ENCODE measurements at regions of chr21 and their contacts with region 1.

Region 1: GRCh38 chr21:25313829-25314228 is 293.5 kb downstream of the MRPL39 start:
- DNase-seq: peak; percentile 67
- ATAC-seq: peak; percentile 85
- H3K4me3 ChIP-seq: no peak overlapping the region
- H3K27ac ChIP-seq: no peak overlapping the region
- H3K4me1 ChIP-seq: peaks cover 1% of the 10 kb centered on the region; the same call in 1 of the 2 replicates
- H3K27me3 ChIP-seq: no peaks in the 10 kb centered on the region
- CTCF ChIP-seq: peak; percentile 68
- POLR2A ChIP-seq: no peak
- RAD21 ChIP-seq: peak; percentile 75

Region 2: DNA sequence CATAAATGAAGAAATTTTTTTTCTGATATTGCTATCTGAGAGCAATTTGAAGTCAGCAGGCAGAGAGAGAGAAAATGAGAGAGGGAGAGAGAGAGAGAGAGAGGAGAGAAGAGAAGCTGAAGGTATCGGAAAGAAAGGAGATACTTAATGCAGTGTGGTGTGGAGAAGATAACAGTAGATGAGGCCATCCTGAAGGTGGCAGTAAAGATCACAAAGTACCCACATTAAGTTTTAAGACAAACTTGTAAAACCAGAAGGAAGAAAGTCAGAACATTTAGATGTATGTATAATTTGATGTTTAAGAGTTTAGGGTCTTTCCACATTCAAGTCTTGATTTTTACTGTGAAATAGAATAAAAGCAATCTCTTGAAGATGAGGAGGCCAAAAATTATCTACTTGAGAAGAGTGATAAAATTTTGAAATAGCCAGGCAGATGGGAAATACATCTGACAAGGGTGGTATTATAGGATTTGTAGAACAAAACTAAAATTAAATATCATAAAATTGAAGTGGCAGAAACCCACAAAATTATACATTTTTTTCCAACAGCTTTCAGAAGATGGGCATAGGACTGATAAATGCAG is 1459.9 kb before region 1 on chr21:
- CTCF ChIA-PET with region 1: no interaction called
- POLR2A ChIA-PET with region 1: no interaction called
- dilution Hi-C with region 1: no loop called
- in situ Hi-C with region 1: no loop called
- intact Hi-C with region 1: loop called (anchors 10 kb)
- DNase-seq: peak; percentile 31
- ATAC-seq: peak; percentile 66
- H3K4me3 ChIP-seq: no peak overlapping the region
- H3K27ac ChIP-seq: no peak overlapping the region
- H3K4me1 ChIP-seq: no peaks in the 10 kb centered on the region
- H3K27me3 ChIP-seq: no peaks in the 10 kb centered on the region
- CTCF ChIP-seq: peak; percentile 51
- POLR2A ChIP-seq: no peak
- RAD21 ChIP-seq: peak; percentile 50

Region 3: GRCh38 chr21:24514081-24514733 is 799.6 kb before region 1 on chr21:
- CTCF ChIA-PET with region 1: no interaction called
- POLR2A ChIA-PET with region 1: no interaction called
- dilution Hi-C with region 1: no loop called
- in situ Hi-C with region 1: no loop called
- intact Hi-C with region 1: loop called (anchors 5 kb)
- DNase-seq: peak; percentile 27
- ATAC-seq: no peak; the same call in 1 of the 2 replicates
- H3K4me3 ChIP-seq: no peak overlapping the region
- H3K27ac ChIP-seq: no peak overlapping the region
- H3K4me1 ChIP-seq: no peaks in the 10 kb centered on the region
- H3K27me3 ChIP-seq: no peaks in the 10 kb centered on the region
- CTCF ChIP-seq: peak; percentile 73
- POLR2A ChIP-seq: no peak
- RAD21 ChIP-seq: peak; percentile 71

Region 4: DNA sequence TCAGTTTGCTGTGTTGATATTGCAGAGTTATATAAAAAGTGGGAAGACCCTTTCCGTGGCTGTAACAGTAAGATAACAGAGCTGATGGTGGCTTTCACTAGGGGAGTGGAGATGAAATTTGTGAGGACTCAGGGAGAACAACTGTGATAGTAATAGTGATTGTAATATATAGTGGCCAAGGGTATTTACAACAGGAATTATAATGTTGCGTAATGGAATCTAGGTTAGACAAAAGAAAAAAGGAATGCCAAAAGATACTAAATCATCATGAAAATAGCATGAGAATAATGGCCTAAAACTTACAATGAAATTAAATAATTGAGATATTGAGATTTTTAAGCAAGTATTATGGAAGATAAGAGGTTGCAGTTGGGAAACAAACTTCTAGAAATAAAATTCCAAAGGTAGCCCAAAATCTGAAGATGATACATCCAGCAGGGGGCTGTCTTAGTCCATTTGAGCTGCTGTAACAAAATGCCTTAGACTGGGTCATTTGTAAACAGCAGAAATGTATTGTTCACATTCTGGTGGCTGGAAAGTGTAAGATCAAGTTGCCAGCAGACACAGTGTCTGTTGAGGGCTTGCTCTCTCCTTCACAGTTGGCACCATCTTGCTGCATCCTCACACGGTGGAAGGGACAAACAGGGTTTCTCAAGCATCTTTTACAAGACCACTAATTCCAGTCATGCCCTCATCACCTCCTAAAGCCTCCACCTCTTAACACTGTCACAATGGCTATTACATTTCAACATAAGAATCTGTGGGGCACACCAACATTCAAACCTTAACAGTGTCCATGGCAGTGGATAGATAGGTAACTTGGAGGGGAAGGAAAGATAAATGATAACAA is 417.7 kb before region 1 on chr21:
- CTCF ChIA-PET with region 1: interaction called, 4 read pairs
- POLR2A ChIA-PET with region 1: no interaction called
- dilution Hi-C with region 1: no loop called
- in situ Hi-C with region 1: no loop called
- intact Hi-C with region 1: loop called (anchors 2 kb)
- DNase-seq: peak; percentile 25
- ATAC-seq: peak; percentile 66; the same call in 1 of the 2 replicates
- H3K4me3 ChIP-seq: no peak overlapping the region
- H3K27ac ChIP-seq: no peak overlapping the region
- H3K4me1 ChIP-seq: no peaks in the 10 kb centered on the region
- H3K27me3 ChIP-seq: no peaks in the 10 kb centered on the region
- CTCF ChIP-seq: peak; percentile 43
- POLR2A ChIP-seq: no peak
- RAD21 ChIP-seq: peak; percentile 64

Region 5: DNA sequence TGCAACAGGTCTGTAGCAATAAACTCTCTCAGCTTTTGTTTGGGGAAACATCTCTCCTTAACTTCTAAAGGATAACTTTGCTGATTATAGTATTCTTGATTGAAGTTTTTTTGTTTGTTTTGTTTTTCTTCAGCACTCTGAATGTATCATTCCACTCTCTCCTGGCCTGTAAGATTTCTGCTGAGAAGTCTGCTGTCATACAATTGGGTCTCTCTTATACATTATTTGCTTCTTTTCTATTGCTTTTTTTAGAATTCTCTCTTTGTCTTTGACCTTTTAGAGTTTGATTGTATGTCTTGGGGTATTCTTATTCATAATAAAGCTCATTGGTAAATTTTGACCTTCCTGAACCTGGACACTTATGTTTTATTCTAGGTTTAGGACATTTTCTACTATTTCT is 92.9 kb before region 1 on chr21:
- CTCF ChIA-PET with region 1: no interaction called
- POLR2A ChIA-PET with region 1: interaction called, 16 read pairs
- dilution Hi-C with region 1: no loop called
- in situ Hi-C with region 1: no loop called
- intact Hi-C with region 1: no loop called
- DNase-seq: no peak
- ATAC-seq: no peak
- H3K4me3 ChIP-seq: no peak overlapping the region
- H3K27ac ChIP-seq: no peak overlapping the region
- H3K4me1 ChIP-seq: no peaks in the 10 kb centered on the region
- H3K27me3 ChIP-seq: no peaks in the 10 kb centered on the region
- CTCF ChIP-seq: no peak
- POLR2A ChIP-seq: no peak
- RAD21 ChIP-seq: no peak

Region 6: GRCh38 chr21:25283720-25284119 is 30.1 kb before region 1 on chr21:
- CTCF ChIA-PET with region 1: interaction called, 6 read pairs
- POLR2A ChIA-PET with region 1: no interaction called
- dilution Hi-C with region 1: no loop called
- in situ Hi-C with region 1: no loop called
- intact Hi-C with region 1: loop called (anchors 2 kb)
- DNase-seq: peak; percentile 56
- ATAC-seq: peak; percentile 81
- H3K4me3 ChIP-seq: no peak overlapping the region
- H3K27ac ChIP-seq: no peak overlapping the region
- H3K4me1 ChIP-seq: no peaks in the 10 kb centered on the region
- H3K27me3 ChIP-seq: no peaks in the 10 kb centered on the region
- CTCF ChIP-seq: peak; percentile 58
- POLR2A ChIP-seq: no peak
- RAD21 ChIP-seq: peak; percentile 52